ENCODE measurements at regions of chr12 and their contacts with region 1.

Region 1: DNA sequence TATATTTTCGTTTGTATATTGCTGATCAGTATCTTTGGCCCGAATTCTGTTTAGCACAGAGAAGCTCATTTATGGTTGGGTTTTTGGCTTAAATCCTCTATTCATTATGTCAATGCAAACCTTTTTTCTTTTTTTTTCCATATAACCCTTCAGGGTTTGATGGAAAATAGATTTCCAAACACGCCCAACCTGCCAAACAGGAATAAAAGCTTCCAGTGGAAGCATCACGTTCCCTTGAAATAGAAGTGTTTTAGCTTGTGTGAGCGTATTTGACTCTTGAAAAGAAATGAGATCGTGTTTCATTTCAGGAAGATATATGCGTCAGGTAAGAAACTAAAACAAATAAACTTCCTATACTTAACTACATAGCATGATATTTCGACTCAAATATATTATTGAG is at the start of gene PIK3C2G:
- DNase-seq: peak; percentile 62
- H3K4me3 ChIP-seq: peak within 1 kb of the TSS; percentile 45 to 99 (median 66)
- H3K27ac ChIP-seq: peak within 1 kb of the TSS; percentile 97
- H3K4me1 ChIP-seq: peaks cover 7% of the 10 kb centered on the region
- H3K27me3 ChIP-seq: no peaks in the 10 kb centered on the region
- CTCF ChIP-seq: no peak
- total RNA-seq, gene PIK3C2G: 8.6 to 18.2 TPM

Region 2: GRCh38 chr12:18296201-18296908 is 35.1 kb after region 1 on chr12:
- CTCF ChIA-PET with region 1: interaction called, 3 read pairs
- dilution Hi-C with region 1: no loop called
- in situ Hi-C with region 1: no loop called
- intact Hi-C with region 1: loop called (anchors 2 kb)
- DNase-seq: peak; percentile 44
- H3K4me3 ChIP-seq: peak overlapping the region; percentile 32 to 94 (median 56)
- H3K27ac ChIP-seq: peak overlapping the region; percentile 90
- H3K4me1 ChIP-seq: no peaks in the 10 kb centered on the region
- H3K27me3 ChIP-seq: no peaks in the 10 kb centered on the region
- CTCF ChIP-seq: no peak

Region 3: DNA sequence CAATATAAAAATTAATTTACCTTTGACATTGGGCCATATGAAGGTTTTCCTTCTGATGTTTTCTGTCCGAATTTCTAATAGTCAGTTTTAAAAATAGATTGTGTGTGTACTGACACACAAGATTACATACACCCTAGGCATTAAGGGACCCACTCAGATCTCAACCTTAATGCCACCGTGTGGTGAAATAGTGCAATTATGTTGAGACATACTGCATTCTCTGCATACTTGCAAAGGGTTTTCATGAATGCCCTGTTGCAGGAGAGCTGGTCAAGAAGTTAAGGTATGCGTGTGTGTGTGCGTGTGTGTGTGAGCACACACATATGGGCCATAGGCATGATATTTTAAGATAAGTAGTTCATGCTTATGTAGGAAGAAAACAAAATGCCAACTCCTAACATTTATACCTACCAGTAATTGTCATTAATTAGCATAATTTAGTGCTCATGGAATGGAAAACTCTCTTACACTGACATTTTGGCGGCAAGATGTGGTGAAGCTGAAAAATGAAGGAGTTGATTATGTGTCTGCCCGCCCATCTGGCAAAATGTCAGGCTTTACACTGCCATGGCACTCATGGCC is 58.9 kb after region 1 on chr12:
- CTCF ChIA-PET with region 1: interaction called, 13 read pairs
- dilution Hi-C with region 1: no loop called
- in situ Hi-C with region 1: loop called in 1 of 2 experiments (anchors 5 kb)
- intact Hi-C with region 1: loop called (anchors 1 kb)
- DNase-seq: peak; percentile 78
- H3K4me3 ChIP-seq: no peak overlapping the region
- H3K27ac ChIP-seq: peak overlapping the region; percentile 11
- H3K4me1 ChIP-seq: peaks cover 8% of the 10 kb centered on the region
- H3K27me3 ChIP-seq: no peaks in the 10 kb centered on the region
- CTCF ChIP-seq: peak; percentile 63 to 74

Region 4: DNA sequence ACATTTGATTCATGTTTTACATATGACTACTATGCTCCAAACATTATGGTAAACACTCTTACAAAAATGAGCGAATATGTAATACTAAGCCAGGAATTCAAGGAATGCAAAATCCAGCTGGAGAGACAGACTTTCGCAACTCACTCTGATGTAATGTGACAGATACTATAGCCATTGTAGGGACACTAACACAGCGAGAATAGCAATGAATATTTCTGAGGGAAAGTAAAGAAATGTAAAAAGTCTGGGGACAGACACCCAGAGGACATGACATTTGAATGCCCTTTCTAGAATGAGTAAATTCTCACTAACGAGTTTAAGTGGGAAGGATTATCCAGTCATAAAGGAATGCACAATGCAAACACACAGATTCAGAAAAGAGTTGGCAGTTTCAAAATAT is 122.0 kb after region 1 on chr12:
- CTCF ChIA-PET with region 1: no interaction called
- dilution Hi-C with region 1: no loop called
- in situ Hi-C with region 1: no loop called
- intact Hi-C with region 1: loop called (anchors 5 kb)
- DNase-seq: peak; percentile 63
- H3K4me3 ChIP-seq: no peak overlapping the region
- H3K27ac ChIP-seq: no peak overlapping the region
- H3K4me1 ChIP-seq: peaks cover 20% of the 10 kb centered on the region
- H3K27me3 ChIP-seq: no peaks in the 10 kb centered on the region
- CTCF ChIP-seq: no peak

Region 5: GRCh38 chr12:18690653-18691052 is 429.4 kb after region 1 on chr12:
- CTCF ChIA-PET with region 1: no interaction called
- dilution Hi-C with region 1: no loop called
- in situ Hi-C with region 1: no loop called
- intact Hi-C with region 1: loop called (anchors 5 kb)
- DNase-seq: peak; percentile 99
- H3K4me3 ChIP-seq: no peak overlapping the region
- H3K27ac ChIP-seq: peak overlapping the region; percentile 96
- H3K4me1 ChIP-seq: peaks cover 21% of the 10 kb centered on the region
- H3K27me3 ChIP-seq: no peaks in the 10 kb centered on the region
- CTCF ChIP-seq: no peak